HepG2 (cell line): ENCODE measurements at regions of chr22 and their contacts with region 1.

Region 1: DNA sequence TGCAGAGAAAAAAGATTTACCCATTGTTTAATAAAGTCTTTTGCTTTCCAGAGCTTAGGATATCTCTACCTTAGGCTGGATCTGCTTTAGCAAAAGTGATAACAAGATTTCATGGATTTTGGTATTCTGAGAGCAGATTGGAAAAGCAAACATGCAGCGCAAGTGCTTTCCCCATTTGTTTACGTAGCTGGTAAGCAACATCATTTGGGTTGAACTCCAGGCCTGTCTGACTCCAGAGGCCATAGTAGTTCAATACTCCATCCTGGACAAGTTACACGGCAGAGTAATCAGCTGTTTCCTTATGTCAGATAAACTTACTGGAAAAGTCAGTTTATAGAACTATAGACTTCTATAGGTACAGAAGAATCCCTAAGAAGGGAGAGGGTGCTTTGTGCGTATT is 40.6 kb upstream of the TNRC6B start:
- DNase-seq: no peak
- ATAC-seq: no peak
- H3K4me3 ChIP-seq: no peak overlapping the region
- H3K27ac ChIP-seq: no peak overlapping the region
- H3K4me1 ChIP-seq: no peaks in the 10 kb centered on the region; the same call in 1 of the 2 replicates
- H3K27me3 ChIP-seq: no peaks in the 10 kb centered on the region
- CTCF ChIP-seq: no peak
- EP300 ChIP-seq: no peak
- POLR2A ChIP-seq: no peak
- RAD21 ChIP-seq: no peak

Region 2: DNA sequence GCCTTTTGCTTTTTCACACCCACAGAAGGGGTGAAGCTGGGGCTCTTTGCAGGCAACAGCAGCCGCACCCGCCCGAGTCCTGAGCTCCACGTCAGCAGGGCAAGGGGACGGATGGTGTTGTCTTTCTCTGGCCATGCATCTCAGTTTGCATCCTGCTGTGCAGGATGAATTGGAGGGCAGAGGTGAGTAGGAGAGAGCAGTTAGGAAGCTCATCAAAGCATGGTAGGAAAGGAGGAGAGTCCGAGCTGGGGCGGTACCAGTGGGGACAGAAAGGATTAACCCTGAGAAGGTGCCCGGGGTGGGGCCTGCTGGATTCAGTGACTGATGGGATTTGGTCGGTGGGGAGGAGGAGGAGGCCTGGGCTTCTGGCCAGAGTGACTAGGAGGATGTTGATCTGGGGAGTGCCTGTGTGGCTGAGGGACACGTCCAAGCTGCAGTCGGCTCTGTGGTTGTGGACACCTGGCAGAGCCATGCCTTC is 127.8 kb before region 1 on chr22:
- CTCF ChIA-PET with region 1: no interaction called
- POLR2A ChIA-PET with region 1: no interaction called
- in situ Hi-C with region 1: no loop called
- intact Hi-C with region 1: no loop called
- DNase-seq: no peak
- ATAC-seq: no peak
- H3K4me3 ChIP-seq: no peak overlapping the region
- H3K27ac ChIP-seq: no peak overlapping the region
- H3K4me1 ChIP-seq: no peaks in the 10 kb centered on the region
- H3K27me3 ChIP-seq: peaks cover 2 to 45% of the 10 kb centered on the region in 2 experiments; a peak in 3 of 5 replicates
- CTCF ChIP-seq: no peak
- EP300 ChIP-seq: no peak
- POLR2A ChIP-seq: no peak
- RAD21 ChIP-seq: no peak

Region 3: GRCh38 chr22:40055143-40055883 is 81.8 kb before region 1 on chr22:
- CTCF ChIA-PET with region 1: no interaction called
- POLR2A ChIA-PET with region 1: no interaction called
- in situ Hi-C with region 1: no loop called
- intact Hi-C with region 1: loop called (anchors 1 kb)
- DNase-seq: no peak
- ATAC-seq: no peak
- H3K4me3 ChIP-seq: no peak overlapping the region
- H3K27ac ChIP-seq: no peak overlapping the region
- H3K4me1 ChIP-seq: peaks cover 26% of the 10 kb centered on the region
- H3K27me3 ChIP-seq: no peaks in the 10 kb centered on the region
- CTCF ChIP-seq: no peak
- EP300 ChIP-seq: no peak
- POLR2A ChIP-seq: no peak
- RAD21 ChIP-seq: no peak

Region 4: GRCh38 chr22:40323681-40324171 is 186.6 kb after region 1 on chr22:
- CTCF ChIA-PET with region 1: no interaction called
- POLR2A ChIA-PET with region 1: no interaction called
- in situ Hi-C with region 1: no loop called
- intact Hi-C with region 1: no loop called
- DNase-seq: no peak
- ATAC-seq: no peak
- H3K4me3 ChIP-seq: no peak overlapping the region
- H3K27ac ChIP-seq: no peak overlapping the region
- H3K4me1 ChIP-seq: no peaks in the 10 kb centered on the region
- H3K27me3 ChIP-seq: no peaks in the 10 kb centered on the region
- CTCF ChIP-seq: no peak
- EP300 ChIP-seq: no peak
- POLR2A ChIP-seq: no peak
- RAD21 ChIP-seq: no peak